ENCODE measurements at regions of chr2 and their contacts with region 1.

Region 1: GRCh38 chr2:59774821-59775433 is 778.5 kb downstream of the BCL11A start:
- DNase-seq: no peak
- ATAC-seq: no peak
- H3K4me3 ChIP-seq: no peak overlapping the region
- H3K27ac ChIP-seq: no peak overlapping the region
- H3K4me1 ChIP-seq: no peaks in the 10 kb centered on the region
- H3K27me3 ChIP-seq: no peaks in the 10 kb centered on the region
- CTCF ChIP-seq: no peak
- EP300 ChIP-seq: no peak
- POLR2A ChIP-seq: no peak
- RAD21 ChIP-seq: no peak

Region 2: DNA sequence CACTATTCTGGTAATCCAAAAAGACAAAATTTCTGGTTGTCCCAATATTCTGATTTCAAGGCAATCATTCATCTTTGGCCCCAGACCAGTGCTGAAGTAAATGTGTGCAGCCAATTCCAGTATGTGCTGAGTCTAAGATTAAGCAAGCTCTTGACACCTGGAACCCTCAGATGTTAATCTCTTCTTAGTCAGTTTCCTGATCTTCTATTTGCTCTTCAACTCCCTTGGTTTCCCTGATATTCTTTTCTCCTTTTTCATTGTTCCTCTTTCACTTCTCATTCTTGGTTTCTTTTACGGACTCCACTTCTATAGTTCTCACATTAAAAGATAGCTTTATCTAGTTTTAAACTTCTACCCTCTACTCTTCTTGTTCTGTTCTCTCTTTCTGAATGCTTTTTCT is 1088.2 kb before region 1 on chr2:
- CTCF ChIA-PET with region 1: no interaction called
- POLR2A ChIA-PET with region 1: no interaction called
- in situ Hi-C with region 1: no loop called
- intact Hi-C with region 1: no loop called
- DNase-seq: no peak
- ATAC-seq: no peak
- H3K4me3 ChIP-seq: no peak overlapping the region
- H3K27ac ChIP-seq: no peak overlapping the region
- H3K4me1 ChIP-seq: no peaks in the 10 kb centered on the region
- H3K27me3 ChIP-seq: no peaks in the 10 kb centered on the region
- CTCF ChIP-seq: no peak
- EP300 ChIP-seq: no peak
- POLR2A ChIP-seq: no peak
- RAD21 ChIP-seq: no peak

Region 3: GRCh38 chr2:59047373-59047995 is 727.4 kb before region 1 on chr2:
- CTCF ChIA-PET with region 1: no interaction called
- POLR2A ChIA-PET with region 1: no interaction called
- in situ Hi-C with region 1: no loop called
- intact Hi-C with region 1: loop called (anchors 5 kb)
- DNase-seq: no peak
- ATAC-seq: no peak
- H3K4me3 ChIP-seq: no peak overlapping the region
- H3K27ac ChIP-seq: no peak overlapping the region
- H3K4me1 ChIP-seq: no peaks in the 10 kb centered on the region
- H3K27me3 ChIP-seq: no peaks in the 10 kb centered on the region
- CTCF ChIP-seq: no peak
- EP300 ChIP-seq: no peak
- POLR2A ChIP-seq: no peak
- RAD21 ChIP-seq: no peak

Measured in HepG2 (cell line).